ENCODE measurements at regions of chr16 and their contacts with region 1.

Region 1: GRCh38 chr16:30526823-30527635 is 663 bp upstream of the ZNF768 start:
- DNase-seq: peak; percentile 98
- H3K4me3 ChIP-seq: peak overlapping the region; percentile 58 to 67 (median 65)
- H3K27ac ChIP-seq: peak overlapping the region; percentile 80
- H3K4me1 ChIP-seq: peaks cover 4% of the 10 kb centered on the region
- H3K27me3 ChIP-seq: no peaks in the 10 kb centered on the region
- CTCF ChIP-seq: peak; percentile 13 to 56
- POLR2A ChIP-seq: peak; percentile 58

Region 2: DNA sequence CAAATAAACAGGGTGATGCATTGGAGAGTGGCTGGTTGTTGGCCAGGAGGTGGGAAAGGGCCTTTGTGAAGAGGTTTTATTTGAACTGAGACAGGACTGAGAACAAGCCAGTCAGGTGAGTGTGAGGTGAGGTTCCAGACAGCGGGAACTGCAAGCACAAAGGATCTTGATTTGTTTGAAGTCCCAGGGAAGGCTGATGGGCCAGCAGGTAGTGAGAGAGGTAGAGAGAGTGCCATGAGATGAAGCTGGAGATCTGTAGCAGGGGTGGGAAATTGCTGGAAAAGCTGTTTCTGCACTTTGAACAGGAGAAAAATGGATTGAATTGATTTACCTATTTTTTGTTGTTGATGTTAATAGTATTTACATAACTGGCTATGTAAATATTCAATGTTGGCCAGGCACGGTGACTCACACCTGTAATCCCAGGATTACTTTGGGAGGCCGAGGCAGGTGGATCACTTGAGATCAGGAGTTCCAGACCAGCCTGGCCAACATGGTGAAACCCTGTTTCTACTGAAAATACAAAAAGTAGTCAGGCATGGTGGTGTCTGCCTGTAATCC is 89.5 kb before region 1 on chr16:
- CTCF ChIA-PET with region 1: no interaction called
- POLR2A ChIA-PET with region 1: no interaction called
- dilution Hi-C with region 1: no loop called
- intact Hi-C with region 1: no loop called
- DNase-seq: no peak
- H3K4me3 ChIP-seq: no peak overlapping the region
- H3K27ac ChIP-seq: no peak overlapping the region
- H3K4me1 ChIP-seq: no peaks in the 10 kb centered on the region
- H3K27me3 ChIP-seq: peaks cover 0 to 4% of the 10 kb centered on the region in 2 experiments
- CTCF ChIP-seq: no peak
- POLR2A ChIP-seq: no peak

Region 3: DNA sequence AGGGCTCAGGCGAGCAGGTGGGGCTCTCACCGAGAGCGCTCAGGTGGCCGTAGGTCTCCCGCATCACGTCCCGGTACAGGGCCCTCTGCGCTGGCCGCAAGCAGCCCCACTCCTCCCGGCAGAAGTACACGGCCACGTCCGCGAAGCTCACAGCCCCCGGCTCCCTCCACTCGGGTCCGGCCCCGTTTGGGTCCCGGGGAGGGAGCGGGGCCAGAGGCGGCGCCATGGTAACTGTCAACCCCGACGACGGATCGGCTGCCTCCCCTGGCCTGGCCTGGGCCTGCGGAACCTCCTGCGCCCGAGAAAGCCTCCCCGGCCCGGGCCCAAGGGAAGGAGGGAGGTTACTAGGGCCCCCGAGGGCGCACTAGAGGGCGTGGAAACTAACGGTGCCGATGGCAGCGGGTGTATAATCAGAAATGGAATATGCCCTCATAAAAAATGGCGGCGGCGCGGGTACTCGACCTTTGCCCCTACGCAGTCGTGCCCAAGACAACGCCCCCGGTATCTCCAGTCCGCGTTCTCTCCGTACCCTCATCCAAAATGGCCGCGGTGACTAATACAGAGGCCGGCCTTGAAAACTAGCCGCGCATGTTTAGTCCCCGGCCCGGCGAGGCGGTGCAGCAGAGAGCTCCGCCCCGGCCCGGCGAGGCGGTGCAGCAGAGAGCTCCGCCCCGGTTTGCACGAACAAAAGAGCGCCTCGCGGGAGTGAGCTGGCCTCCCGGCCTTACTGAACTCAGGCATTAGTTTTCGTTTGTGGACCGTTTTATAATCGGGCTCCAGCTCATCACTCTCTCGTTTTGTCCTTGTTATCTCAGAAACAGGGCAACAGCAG is 31.1 kb after region 1 on chr16 and contains the start of gene ZNF764:
- CTCF ChIA-PET with region 1: interaction called, 3 read pairs
- POLR2A ChIA-PET with region 1: interaction called, 4 read pairs
- dilution Hi-C with region 1: no loop called
- intact Hi-C with region 1: loop called (anchors 1 kb)
- DNase-seq: peak; percentile 98
- H3K4me3 ChIP-seq: peak within 1 kb of the TSS; percentile 67 to 89 (median 75)
- H3K27ac ChIP-seq: peak within 1 kb of the TSS; percentile 83
- H3K4me1 ChIP-seq: peaks cover 12% of the 10 kb centered on the region
- H3K27me3 ChIP-seq: no peaks in the 10 kb centered on the region
- CTCF ChIP-seq: no peak
- POLR2A ChIP-seq: peak; percentile 93
- total RNA-seq, gene ZNF764: 10.7 and 12.1 TPM in 2 replicates

Region 4: GRCh38 chr16:30571695-30572600 is 44.9 kb after region 1 on chr16 and contains the start of gene ZNF688:
- CTCF ChIA-PET with region 1: no interaction called
- POLR2A ChIA-PET with region 1: no interaction called
- dilution Hi-C with region 1: no loop called
- intact Hi-C with region 1: loop called (anchors 1 kb)
- DNase-seq: peak; percentile 97
- H3K4me3 ChIP-seq: peak within 1 kb of the TSS; percentile 31 to 77 (median 76)
- H3K27ac ChIP-seq: peak within 1 kb of the TSS; percentile 78
- H3K4me1 ChIP-seq: peaks cover 16% of the 10 kb centered on the region
- H3K27me3 ChIP-seq: no peaks in the 10 kb centered on the region
- CTCF ChIP-seq: no peak
- POLR2A ChIP-seq: peak; percentile 86
- total RNA-seq, gene ZNF688: 10.5 and 10.9 TPM in 2 replicates

Region 5: DNA sequence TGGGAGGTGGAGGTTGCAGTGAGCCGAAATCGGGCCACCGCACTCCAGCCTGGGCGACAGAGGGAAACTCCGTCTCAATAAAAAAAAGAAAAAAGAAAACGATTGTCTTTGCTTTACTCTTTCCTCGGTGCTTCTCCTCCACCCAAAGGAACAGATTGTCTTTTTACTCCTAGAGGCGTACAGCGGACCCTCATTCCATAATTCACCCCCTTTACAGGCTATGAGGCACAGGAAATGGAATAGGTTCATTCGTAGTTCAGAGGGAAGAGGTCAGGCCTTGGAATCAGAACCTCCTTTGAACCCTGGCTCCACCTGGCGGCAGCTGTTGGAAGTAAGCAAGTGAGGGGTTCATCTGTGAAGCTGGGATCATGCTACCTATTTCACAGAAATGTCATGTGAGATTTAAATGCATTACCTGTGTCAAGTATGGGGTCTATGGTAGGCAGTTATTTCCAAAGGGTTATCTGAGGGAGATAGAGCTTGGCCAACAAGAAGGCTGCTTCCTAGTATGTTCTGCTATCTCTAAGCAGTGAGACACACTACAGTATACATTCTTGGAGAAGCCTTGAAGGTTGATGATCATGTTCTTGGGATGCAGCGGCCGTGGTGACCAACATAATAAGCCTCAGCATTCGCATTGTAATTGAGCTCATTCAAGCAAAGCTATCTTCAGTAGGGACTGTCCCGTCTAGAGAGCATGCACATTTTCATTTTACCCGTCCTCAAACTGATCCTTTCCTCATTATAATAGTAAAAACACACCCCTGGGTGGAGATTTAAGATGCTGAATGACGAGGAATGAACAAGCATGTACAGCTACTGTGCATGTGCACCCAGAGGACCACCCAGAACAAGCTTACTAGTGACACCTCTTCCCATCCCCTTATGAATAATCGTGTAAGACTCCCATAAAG is 101.9 kb after region 1 on chr16:
- CTCF ChIA-PET with region 1: no interaction called
- POLR2A ChIA-PET with region 1: no interaction called
- dilution Hi-C with region 1: no loop called
- intact Hi-C with region 1: loop called (anchors 1 kb)
- DNase-seq: peak; percentile 77
- H3K4me3 ChIP-seq: peak overlapping the region in 1 of 3 experiments; percentile 27
- H3K27ac ChIP-seq: no peak overlapping the region
- H3K4me1 ChIP-seq: peaks cover 3% of the 10 kb centered on the region
- H3K27me3 ChIP-seq: peaks cover 2% of the 10 kb centered on the region in 2 experiments
- CTCF ChIP-seq: peak; percentile 85 to 91
- POLR2A ChIP-seq: no peak

Measured in endothelial cell of umbilical vein (primary cell).